Endothelial cell of umbilical vein (primary cell): ENCODE measurements at regions of chr6 and their contacts with region 1.

Region 1: GRCh38 chr6:70369332-70369950 is 43.9 kb upstream of the FAM135A start:
- DNase-seq: peak; percentile 68
- H3K4me3 ChIP-seq: no peak overlapping the region
- H3K27ac ChIP-seq: no peak overlapping the region
- H3K4me1 ChIP-seq: no peaks in the 10 kb centered on the region
- H3K27me3 ChIP-seq: peaks cover 7 to 24% of the 10 kb centered on the region in 2 experiments
- CTCF ChIP-seq: peak; percentile 91 to 92
- POLR2A ChIP-seq: no peak

Region 2: DNA sequence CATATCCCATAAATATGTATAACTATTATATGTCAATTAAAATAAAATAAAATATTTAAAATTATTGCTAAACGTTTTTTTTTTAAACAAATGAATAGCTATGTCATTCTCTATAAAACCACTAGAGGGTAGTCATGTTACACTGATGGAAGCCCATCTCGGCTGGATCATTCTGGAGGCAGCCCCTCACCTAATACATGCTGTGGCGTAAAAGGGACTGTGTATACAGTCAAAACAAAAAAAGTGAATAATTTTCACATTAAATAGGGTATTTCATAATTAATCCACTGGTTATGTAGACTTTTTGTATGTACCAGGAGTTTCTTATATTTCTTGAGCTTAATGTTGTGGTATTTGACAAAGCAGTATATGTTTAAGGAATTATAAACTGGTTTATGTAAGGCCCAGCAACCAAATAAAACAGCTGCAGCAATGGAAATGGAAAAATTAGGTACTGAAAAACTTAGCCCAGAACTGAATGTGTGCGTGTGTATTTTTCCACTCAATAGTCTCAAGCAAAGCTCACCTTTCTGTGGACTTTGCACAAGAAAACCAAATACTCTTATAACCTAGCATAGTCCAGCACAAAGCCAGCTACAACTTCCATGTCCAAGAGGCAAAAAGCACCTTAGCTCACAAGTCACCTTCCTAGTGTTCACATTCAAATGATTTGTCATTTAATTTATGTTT is 148.3 kb before region 1 on chr6:
- CTCF ChIA-PET with region 1: interaction called, 73 read pairs
- POLR2A ChIA-PET with region 1: no interaction called
- dilution Hi-C with region 1: no loop called
- intact Hi-C with region 1: loop called (anchors 1 kb)
- DNase-seq: peak; percentile 32
- H3K4me3 ChIP-seq: no peak overlapping the region
- H3K27ac ChIP-seq: no peak overlapping the region
- H3K4me1 ChIP-seq: no peaks in the 10 kb centered on the region
- H3K27me3 ChIP-seq: no peaks in the 10 kb centered on the region
- CTCF ChIP-seq: peak; percentile 32 to 35
- POLR2A ChIP-seq: no peak

Region 3: DNA sequence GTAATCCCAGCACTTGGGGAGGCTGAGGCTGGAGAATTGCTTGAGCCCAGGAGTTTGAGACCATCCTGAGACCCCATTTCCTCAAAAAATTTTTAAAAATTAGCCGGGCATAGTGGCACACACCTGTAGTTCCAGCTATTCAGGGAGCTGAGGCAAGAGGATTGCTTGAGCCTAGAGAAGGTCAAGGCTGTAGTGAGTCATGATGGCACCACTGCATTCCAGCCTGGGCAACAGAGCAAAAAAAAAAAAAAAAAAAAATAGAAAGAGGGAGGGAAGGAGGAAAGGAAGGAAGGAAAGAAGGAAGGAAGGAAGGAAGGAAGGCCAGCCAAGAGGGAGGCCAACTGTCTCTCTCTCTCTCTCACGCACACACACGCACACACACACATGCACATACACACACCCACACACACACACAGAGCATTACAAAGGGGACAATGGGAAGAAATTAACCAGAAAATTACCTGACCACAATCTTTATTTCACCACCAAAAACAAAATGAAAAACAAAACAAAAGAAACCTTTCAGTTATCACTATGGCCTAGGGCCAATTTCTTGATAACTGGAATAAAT is 16.0 kb before region 1 on chr6:
- CTCF ChIA-PET with region 1: interaction called, 19 read pairs
- POLR2A ChIA-PET with region 1: no interaction called
- dilution Hi-C with region 1: no loop called
- intact Hi-C with region 1: no loop called
- DNase-seq: no peak
- H3K4me3 ChIP-seq: no peak overlapping the region
- H3K27ac ChIP-seq: no peak overlapping the region
- H3K4me1 ChIP-seq: no peaks in the 10 kb centered on the region
- H3K27me3 ChIP-seq: no peaks in the 10 kb centered on the region
- CTCF ChIP-seq: no peak
- POLR2A ChIP-seq: no peak

Region 4: GRCh38 chr6:70389261-70389660 is 19.8 kb after region 1 on chr6:
- CTCF ChIA-PET with region 1: interaction called, 11 read pairs
- POLR2A ChIA-PET with region 1: no interaction called
- dilution Hi-C with region 1: no loop called
- intact Hi-C with region 1: no loop called
- DNase-seq: no peak
- H3K4me3 ChIP-seq: no peak overlapping the region
- H3K27ac ChIP-seq: no peak overlapping the region
- H3K4me1 ChIP-seq: no peaks in the 10 kb centered on the region
- H3K27me3 ChIP-seq: peaks cover 4 to 27% of the 10 kb centered on the region in 2 experiments
- CTCF ChIP-seq: no peak
- POLR2A ChIP-seq: no peak

Region 5: GRCh38 chr6:70673601-70674000 is 304.2 kb after region 1 on chr6:
- CTCF ChIA-PET with region 1: no interaction called
- POLR2A ChIA-PET with region 1: no interaction called
- dilution Hi-C with region 1: no loop called
- intact Hi-C with region 1: no loop called
- DNase-seq: peak; percentile 25
- H3K4me3 ChIP-seq: no peak overlapping the region
- H3K27ac ChIP-seq: no peak overlapping the region
- H3K4me1 ChIP-seq: peaks cover 17% of the 10 kb centered on the region
- H3K27me3 ChIP-seq: no peaks in the 10 kb centered on the region
- CTCF ChIP-seq: no peak
- POLR2A ChIP-seq: no peak

Region 6: GRCh38 chr6:70955441-70956190 is 586.2 kb after region 1 on chr6:
- CTCF ChIA-PET with region 1: interaction called, 12 read pairs
- POLR2A ChIA-PET with region 1: no interaction called
- dilution Hi-C with region 1: no loop called
- intact Hi-C with region 1: no loop called
- DNase-seq: peak; percentile 65
- H3K4me3 ChIP-seq: peak overlapping the region in 2 of 3 experiments; percentile 13 to 31
- H3K27ac ChIP-seq: no peak overlapping the region
- H3K4me1 ChIP-seq: peaks cover 14% of the 10 kb centered on the region
- H3K27me3 ChIP-seq: peaks cover 36 to 72% of the 10 kb centered on the region in 2 experiments
- CTCF ChIP-seq: peak; percentile 84 to 94
- POLR2A ChIP-seq: no peak